ENCODE measurements at regions of chr2 and their contacts with region 1.

Region 1: DNA sequence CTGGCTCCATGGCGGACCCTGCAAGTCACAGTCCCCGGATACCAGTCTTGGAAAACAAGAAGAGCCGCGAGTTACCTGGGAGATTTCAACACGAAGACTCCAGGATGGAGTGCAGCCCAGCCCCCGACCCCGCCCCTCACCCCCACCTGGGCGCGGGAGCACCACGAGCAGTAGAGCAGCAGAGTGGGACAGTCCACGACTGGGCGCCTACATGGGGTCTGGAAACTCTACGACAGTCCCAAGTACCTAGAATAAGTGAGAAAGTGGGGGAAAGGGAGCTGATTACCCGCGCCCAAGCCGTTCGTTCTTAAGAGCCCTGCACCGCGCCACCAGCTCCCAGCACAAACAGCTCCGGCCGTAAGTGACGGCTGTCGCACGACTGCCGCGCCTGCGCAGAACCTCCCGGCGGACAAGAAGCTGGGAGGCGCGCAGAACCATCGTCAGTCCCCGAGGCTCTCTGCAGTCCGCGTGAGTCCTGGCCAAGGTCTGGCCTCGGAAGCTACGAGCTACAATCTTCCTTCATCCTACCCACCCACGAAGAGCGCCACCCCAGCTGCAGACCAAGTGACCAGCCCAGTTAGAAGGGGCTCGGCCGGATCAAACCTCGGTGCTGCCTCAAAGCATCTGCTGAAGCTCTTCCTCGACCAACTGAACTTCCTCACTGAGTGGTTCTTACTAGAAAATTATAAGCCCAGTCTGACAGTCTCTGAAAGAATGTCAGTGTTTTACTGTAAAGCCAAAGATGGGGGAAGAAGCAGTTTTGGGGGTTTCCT is at the start of gene DPY30:
- DNase-seq: peak; percentile 94
- ATAC-seq: peak; percentile 95
- H3K4me3 ChIP-seq: peak within 1 kb of the TSS; percentile 58 to 86 (median 78)
- H3K4me3 Mint-ChIP-seq: peak within 1 kb of the TSS; percentile 97
- H3K27ac ChIP-seq: peak within 1 kb of the TSS; percentile 73 to 76
- H3K27ac Mint-ChIP-seq: peak within 1 kb of the TSS; percentile 97
- H3K4me1 ChIP-seq: peaks cover 5 to 12% of the 10 kb centered on the region in 2 donors
- H3K4me1 Mint-ChIP-seq: peaks cover 19% of the 10 kb centered on the region
- H3K27me3 ChIP-seq: no peaks in the 10 kb centered on the region
- H3K27me3 Mint-ChIP-seq: no peaks in the 10 kb centered on the region
- CTCF ChIP-seq: no peak
- total RNA-seq, gene DPY30: 42.0 and 43.4 TPM in 2 replicates

Region 2: GRCh38 chr2:31980674-31981356 is 58.8 kb before region 1 on chr2:
- CTCF ChIA-PET with region 1: no interaction called
- POLR2A ChIA-PET with region 1: no interaction called
- intact Hi-C with region 1: loop called (anchors 1 kb)
- DNase-seq: peak; percentile 85
- ATAC-seq: peak; percentile 100
- H3K4me3 ChIP-seq: peak overlapping the region in 1 of 5 experiments; percentile 13
- H3K4me3 Mint-ChIP-seq: peak overlapping the region; percentile 57
- H3K27ac ChIP-seq: peak overlapping the region; percentile 81 to 90
- H3K27ac Mint-ChIP-seq: peak overlapping the region; percentile 89
- H3K4me1 ChIP-seq: peaks cover 14 to 16% of the 10 kb centered on the region in 2 donors
- H3K4me1 Mint-ChIP-seq: peaks cover 25% of the 10 kb centered on the region
- H3K27me3 ChIP-seq: no peaks in the 10 kb centered on the region
- H3K27me3 Mint-ChIP-seq: no peaks in the 10 kb centered on the region
- CTCF ChIP-seq: no peak

Region 3: GRCh38 chr2:32074134-32074506 is 34.5 kb after region 1 on chr2:
- CTCF ChIA-PET with region 1: no interaction called
- POLR2A ChIA-PET with region 1: no interaction called
- intact Hi-C with region 1: no loop called
- DNase-seq: no peak
- ATAC-seq: no peak
- H3K4me3 ChIP-seq: no peak overlapping the region
- H3K4me3 Mint-ChIP-seq: no peak overlapping the region
- H3K27ac ChIP-seq: no peak overlapping the region
- H3K27ac Mint-ChIP-seq: no peak overlapping the region
- H3K4me1 ChIP-seq: peaks cover 5% of the 10 kb centered on the region in 2 donors
- H3K4me1 Mint-ChIP-seq: peaks cover 24% of the 10 kb centered on the region
- H3K27me3 ChIP-seq: no peaks in the 10 kb centered on the region
- H3K27me3 Mint-ChIP-seq: no peaks in the 10 kb centered on the region
- CTCF ChIP-seq: no peak

Region 4: GRCh38 chr2:32289165-32289999 is 249.7 kb after region 1 on chr2:
- CTCF ChIA-PET with region 1: no interaction called
- POLR2A ChIA-PET with region 1: no interaction called
- intact Hi-C with region 1: no loop called
- DNase-seq: no peak
- ATAC-seq: no peak
- H3K4me3 ChIP-seq: no peak overlapping the region
- H3K4me3 Mint-ChIP-seq: no peak overlapping the region
- H3K27ac ChIP-seq: no peak overlapping the region
- H3K27ac Mint-ChIP-seq: no peak overlapping the region
- H3K4me1 ChIP-seq: peaks cover 0 to 3% of the 10 kb centered on the region in 2 donors
- H3K4me1 Mint-ChIP-seq: peaks cover 27% of the 10 kb centered on the region
- H3K27me3 ChIP-seq: no peaks in the 10 kb centered on the region
- H3K27me3 Mint-ChIP-seq: no peaks in the 10 kb centered on the region
- CTCF ChIP-seq: no peak

Region 5: DNA sequence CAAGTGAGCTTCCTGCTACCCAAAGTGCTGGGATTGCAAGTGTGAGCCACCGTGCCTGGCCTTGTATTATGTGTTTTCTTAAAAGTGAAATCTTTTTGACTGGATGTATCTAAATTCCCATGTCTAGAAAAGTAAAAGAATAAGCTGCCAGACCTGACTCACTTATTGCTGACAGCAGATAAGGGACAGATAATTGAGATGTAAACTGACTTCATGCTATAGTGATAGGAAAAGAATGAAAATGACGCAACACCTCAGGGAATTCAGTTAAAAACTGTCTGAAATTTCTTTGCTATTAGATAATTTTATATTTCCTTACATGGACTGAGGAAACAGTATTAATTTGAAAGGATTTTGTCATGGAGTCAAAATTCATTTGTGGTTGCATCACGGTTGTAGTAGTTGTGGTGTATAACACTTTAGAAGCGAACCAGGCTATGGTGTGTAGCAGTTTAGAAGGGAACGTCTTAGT is 607.6 kb after region 1 on chr2:
- CTCF ChIA-PET with region 1: no interaction called
- POLR2A ChIA-PET with region 1: no interaction called
- intact Hi-C with region 1: no loop called
- DNase-seq: no peak
- ATAC-seq: no peak
- H3K4me3 ChIP-seq: no peak overlapping the region
- H3K4me3 Mint-ChIP-seq: no peak overlapping the region
- H3K27ac ChIP-seq: no peak overlapping the region
- H3K27ac Mint-ChIP-seq: no peak overlapping the region
- H3K4me1 ChIP-seq: no peaks in the 10 kb centered on the region
- H3K4me1 Mint-ChIP-seq: no peaks in the 10 kb centered on the region
- H3K27me3 ChIP-seq: no peaks in the 10 kb centered on the region
- H3K27me3 Mint-ChIP-seq: no peaks in the 10 kb centered on the region
- CTCF ChIP-seq: no peak

Region 6: GRCh38 chr2:33599175-33599942 is 1559.7 kb after region 1 on chr2 and contains the start of gene FAM98A:
- CTCF ChIA-PET with region 1: no interaction called
- POLR2A ChIA-PET with region 1: no interaction called
- intact Hi-C with region 1: no loop called
- DNase-seq: peak; percentile 99
- ATAC-seq: peak; percentile 94
- H3K4me3 ChIP-seq: peak within 1 kb of the TSS; percentile 78 to 99 (median 90)
- H3K4me3 Mint-ChIP-seq: peak within 1 kb of the TSS; percentile 97
- H3K27ac ChIP-seq: peak within 1 kb of the TSS; percentile 88 to 90
- H3K27ac Mint-ChIP-seq: peak within 1 kb of the TSS; percentile 94
- H3K4me1 ChIP-seq: peaks cover 16% of the 10 kb centered on the region in 2 donors
- H3K4me1 Mint-ChIP-seq: peaks cover 31% of the 10 kb centered on the region
- H3K27me3 ChIP-seq: no peaks in the 10 kb centered on the region
- H3K27me3 Mint-ChIP-seq: no peaks in the 10 kb centered on the region
- CTCF ChIP-seq: no peak
- total RNA-seq, gene FAM98A: 29.4 and 32.1 TPM in 2 replicates

Measured in B cell (primary cell).